ENCODE measurements at regions of chr12 and their contacts with region 1.

Region 1: DNA sequence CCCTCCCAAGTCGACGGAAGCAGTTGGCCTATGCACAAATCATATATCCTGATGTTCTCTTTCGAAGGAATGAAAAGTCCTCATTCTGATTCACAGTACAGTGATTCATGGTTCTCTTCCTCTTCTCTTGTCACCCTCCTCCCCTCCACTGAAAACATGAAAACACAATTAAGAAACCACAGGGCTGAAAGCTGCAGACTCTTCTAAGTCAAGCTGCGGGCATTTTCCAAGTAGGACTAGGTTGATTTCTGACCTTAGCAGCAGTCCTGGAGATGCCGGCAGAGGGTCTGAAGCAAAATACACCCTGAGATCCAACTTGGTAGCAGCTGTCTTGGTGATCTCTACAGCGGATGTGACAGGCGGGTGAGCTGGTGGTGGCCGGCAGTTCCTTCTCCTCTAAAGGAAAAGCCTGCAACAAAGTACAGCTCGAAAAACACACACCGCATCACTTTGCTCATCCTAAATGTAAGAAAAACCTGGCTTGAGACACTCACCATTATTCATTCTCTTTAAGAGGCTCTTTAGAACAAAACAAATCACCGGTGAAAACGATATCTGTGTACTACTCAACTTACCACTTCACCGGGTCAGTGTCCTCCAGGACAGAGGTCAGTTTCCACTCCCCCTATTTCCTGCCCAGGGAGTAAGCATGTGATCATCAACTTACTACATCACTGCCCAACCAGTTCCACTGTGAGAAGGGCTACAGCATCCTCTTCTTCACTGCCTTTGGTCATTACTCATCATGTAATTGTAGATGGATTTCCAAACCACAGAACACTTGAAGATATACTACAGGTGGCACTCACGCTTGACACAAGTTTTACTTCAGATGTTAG is 6.0 kb downstream of the TMCC3 start:
- DNase-seq: no peak
- H3K4me3 Mint-ChIP-seq: peak overlapping the region; percentile 63
- H3K27ac Mint-ChIP-seq: peak overlapping the region; percentile 7
- H3K4me1 Mint-ChIP-seq: peaks cover 46% of the 10 kb centered on the region
- H3K27me3 Mint-ChIP-seq: peaks cover 68% of the 10 kb centered on the region

Region 2: GRCh38 chr12:94621664-94622359 is 22.5 kb before region 1 on chr12:
- intact Hi-C with region 1: loop called (anchors 1 kb)
- DNase-seq: peak; percentile 41
- H3K4me3 Mint-ChIP-seq: peak overlapping the region; percentile 63
- H3K27ac Mint-ChIP-seq: peak overlapping the region; percentile 65
- H3K4me1 Mint-ChIP-seq: peaks cover 27% of the 10 kb centered on the region
- H3K27me3 Mint-ChIP-seq: peaks cover under 1% of the 10 kb centered on the region

Region 3: DNA sequence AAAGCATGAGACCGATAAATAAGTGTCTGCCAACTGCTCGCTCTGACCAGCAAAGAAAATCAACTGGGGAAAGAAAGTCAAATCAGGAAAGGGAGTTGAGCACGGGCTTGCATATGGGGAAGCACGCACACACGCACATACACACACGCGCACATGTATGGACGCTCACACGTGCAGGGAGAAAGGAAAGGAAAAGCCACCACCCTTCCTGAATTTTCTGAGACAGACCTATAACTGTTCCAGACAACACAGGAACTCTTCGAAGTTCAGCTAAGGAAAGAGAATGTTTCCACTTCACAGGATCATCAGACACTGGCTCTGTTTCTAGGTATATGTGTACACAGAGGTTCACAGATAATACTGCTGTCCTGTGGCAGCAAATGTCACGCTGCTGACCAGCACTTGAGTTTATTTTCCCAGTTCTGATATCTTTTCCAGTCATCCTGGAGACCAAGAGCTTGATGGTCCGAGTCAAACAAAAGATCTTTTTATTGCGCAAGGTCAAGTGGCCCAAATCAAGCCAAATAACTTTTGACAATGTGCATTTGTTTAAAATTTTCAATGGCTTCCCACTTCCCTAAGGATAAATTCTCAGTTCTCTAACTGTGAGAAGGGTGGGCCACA is 88.1 kb after region 1 on chr12:
- intact Hi-C with region 1: no loop called
- DNase-seq: no peak
- H3K4me3 Mint-ChIP-seq: no peak overlapping the region
- H3K27ac Mint-ChIP-seq: no peak overlapping the region
- H3K4me1 Mint-ChIP-seq: no peaks in the 10 kb centered on the region
- H3K27me3 Mint-ChIP-seq: peaks cover 6% of the 10 kb centered on the region

Region 4: DNA sequence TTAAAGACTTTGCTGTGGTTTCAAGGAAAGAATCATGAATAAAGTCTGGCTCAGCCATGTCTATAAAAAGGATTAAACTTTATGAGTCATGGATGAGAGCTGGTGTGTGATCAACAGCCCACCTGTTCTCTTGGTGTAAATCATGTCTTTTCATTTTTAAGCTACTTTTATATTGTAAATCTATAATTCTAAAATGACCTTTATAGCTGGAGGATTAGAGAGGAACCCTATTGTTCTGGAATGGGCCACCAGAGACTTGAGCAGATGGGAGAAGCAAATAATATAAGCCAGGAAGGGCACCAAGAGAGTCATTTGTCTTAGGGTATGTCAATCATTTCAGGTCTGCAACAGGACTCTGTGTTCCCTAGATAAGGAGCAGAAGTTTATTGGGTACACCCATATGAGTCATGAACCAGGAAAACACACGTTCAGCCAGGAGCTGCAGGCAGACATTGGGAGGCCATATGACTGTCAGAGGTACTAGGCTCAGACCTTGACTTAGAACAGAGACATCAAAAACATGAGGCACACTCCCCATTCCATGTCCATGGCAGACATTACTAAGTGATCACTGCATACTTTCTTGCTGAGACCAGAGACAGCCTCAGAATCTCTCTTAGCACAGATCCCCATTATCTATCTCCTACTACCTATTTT is 309.8 kb after region 1 on chr12:
- intact Hi-C with region 1: no loop called
- DNase-seq: no peak
- H3K4me3 Mint-ChIP-seq: no peak overlapping the region
- H3K27ac Mint-ChIP-seq: no peak overlapping the region
- H3K4me1 Mint-ChIP-seq: no peaks in the 10 kb centered on the region
- H3K27me3 Mint-ChIP-seq: peaks cover 17% of the 10 kb centered on the region